Calu3 (cell line): ENCODE measurements at regions of chr16 and their contacts with region 1.

Region 1: DNA sequence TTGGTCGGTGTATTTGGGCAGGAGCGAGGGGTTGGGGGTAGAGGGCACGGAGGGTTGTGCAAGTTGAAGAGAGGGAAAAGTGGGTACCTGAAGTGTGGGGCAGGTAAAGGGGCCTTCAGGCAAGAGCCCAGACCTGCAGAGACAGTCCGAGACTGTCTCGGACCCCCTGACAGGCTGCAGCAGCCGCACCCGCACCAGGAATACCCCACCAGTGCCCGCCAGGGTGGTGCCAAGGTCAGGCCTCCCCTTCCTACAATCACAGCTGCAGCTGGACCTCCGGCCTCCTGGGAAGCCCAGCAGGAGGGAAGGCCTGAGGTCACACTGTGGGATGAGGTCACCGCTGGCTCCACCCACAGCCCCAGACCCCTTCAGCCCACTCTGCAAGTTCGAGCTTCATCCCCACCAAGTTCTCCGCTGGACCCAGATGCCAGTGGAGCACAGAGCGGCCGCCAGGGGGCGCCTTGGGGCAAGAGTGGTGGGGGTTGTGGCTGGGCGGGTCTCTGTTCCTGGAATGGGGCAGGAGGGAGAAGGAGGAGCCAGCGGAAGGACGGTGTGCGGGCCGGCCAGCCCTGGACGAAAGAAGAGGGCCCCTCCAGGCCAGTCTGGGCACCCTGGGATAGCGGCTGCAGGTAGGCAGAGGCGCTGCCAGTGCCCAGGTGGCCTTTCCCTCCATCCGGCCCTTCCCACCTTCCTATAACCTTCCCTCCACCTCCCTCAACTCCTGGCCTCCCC is at the start of gene HSD3B7:
- DNase-seq: peak; percentile 97
- H3K4me3 Mint-ChIP-seq: peak within 1 kb of the TSS; percentile 87
- H3K27ac Mint-ChIP-seq: peak within 1 kb of the TSS; percentile 71
- H3K4me1 Mint-ChIP-seq: no peaks in the 10 kb centered on the region
- H3K27me3 Mint-ChIP-seq: no peaks in the 10 kb centered on the region
- CTCF ChIP-seq: peak; percentile 92
- total RNA-seq, gene HSD3B7: 25.3 and 29.2 TPM in 2 replicates

Region 2: DNA sequence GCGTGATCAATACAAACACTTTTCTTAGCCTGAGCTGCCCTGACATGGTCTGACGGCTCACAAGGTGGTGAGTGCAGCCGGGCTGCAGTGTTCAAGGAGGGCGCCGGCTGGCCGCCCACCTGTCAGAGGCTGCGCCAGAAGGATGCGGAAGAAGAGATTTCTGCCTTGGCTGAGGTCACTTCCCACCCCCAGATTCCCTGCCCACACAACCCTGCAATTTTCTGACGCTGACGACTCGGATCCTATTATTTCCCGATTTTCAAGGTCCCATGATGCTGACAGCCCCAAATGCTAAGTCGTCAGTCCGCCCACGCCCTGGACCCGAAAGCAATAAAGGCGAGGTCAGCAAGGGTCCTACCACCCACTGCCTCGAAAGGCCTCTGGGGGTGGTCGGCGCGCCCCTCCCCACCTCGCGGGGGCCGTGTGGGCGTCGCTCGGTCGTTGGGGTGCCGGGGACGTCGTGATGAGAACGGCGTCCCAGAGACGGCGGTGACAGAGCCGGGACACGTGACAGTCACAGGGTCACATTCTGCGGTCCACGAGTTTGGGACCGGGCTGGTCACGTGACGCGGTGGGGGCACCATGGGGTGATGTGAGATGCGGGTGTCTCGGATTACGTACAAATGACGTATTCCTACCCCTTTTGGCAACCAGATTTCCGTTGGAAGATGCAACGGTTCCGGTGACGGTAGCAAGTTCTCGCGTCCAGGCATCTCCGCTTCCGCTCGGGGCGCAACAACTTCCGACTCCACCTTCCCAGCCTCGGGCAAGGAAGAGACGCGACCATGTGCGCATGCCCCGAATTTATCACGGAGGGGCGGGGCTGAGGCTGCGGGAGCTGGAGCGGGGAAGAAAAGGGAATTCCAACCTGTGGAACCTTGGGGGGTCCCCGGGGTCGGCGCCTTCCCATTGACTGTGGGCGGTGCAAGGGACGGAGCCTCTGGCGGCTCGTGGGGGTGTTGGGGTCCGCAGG is 48.2 kb after region 1 on chr16 and contains the start of gene STX4:
- CTCF ChIA-PET with region 1: interaction called, 7 read pairs
- intact Hi-C with region 1: loop called (anchors 5 kb)
- DNase-seq: peak; percentile 97
- H3K4me3 Mint-ChIP-seq: peak within 1 kb of the TSS; percentile 99
- H3K27ac Mint-ChIP-seq: peak within 1 kb of the TSS; percentile 89
- H3K4me1 Mint-ChIP-seq: no peaks in the 10 kb centered on the region
- H3K27me3 Mint-ChIP-seq: no peaks in the 10 kb centered on the region
- CTCF ChIP-seq: no peak
- total RNA-seq, gene STX4: 100 and 104 TPM in 2 replicates

Region 3: GRCh38 chr16:31044190-31044481 is 59.3 kb after region 1 on chr16:
- CTCF ChIA-PET with region 1: no interaction called
- intact Hi-C with region 1: no loop called
- DNase-seq: no peak
- H3K4me3 Mint-ChIP-seq: no peak overlapping the region
- H3K27ac Mint-ChIP-seq: no peak overlapping the region
- H3K4me1 Mint-ChIP-seq: no peaks in the 10 kb centered on the region
- H3K27me3 Mint-ChIP-seq: no peaks in the 10 kb centered on the region
- CTCF ChIP-seq: no peak

Region 4: GRCh38 chr16:31094424-31095120 is 109.7 kb after region 1 on chr16 and contains the start of gene VKORC1:
- CTCF ChIA-PET with region 1: interaction called, 11 read pairs
- intact Hi-C with region 1: loop called (anchors 1 kb)
- DNase-seq: peak; percentile 97
- H3K4me3 Mint-ChIP-seq: peak within 1 kb of the TSS; percentile 89
- H3K27ac Mint-ChIP-seq: peak within 1 kb of the TSS; percentile 82
- H3K4me1 Mint-ChIP-seq: peaks cover 12% of the 10 kb centered on the region
- H3K27me3 Mint-ChIP-seq: no peaks in the 10 kb centered on the region
- CTCF ChIP-seq: no peak
- total RNA-seq, gene VKORC1: 80.1 and 86.8 TPM in 2 replicates

Region 5: GRCh38 chr16:31157136-31157535 is 172.3 kb after region 1 on chr16:
- CTCF ChIA-PET with region 1: no interaction called
- intact Hi-C with region 1: loop called (anchors 5 kb)
- DNase-seq: no peak
- H3K4me3 Mint-ChIP-seq: no peak overlapping the region
- H3K27ac Mint-ChIP-seq: no peak overlapping the region
- H3K4me1 Mint-ChIP-seq: no peaks in the 10 kb centered on the region
- H3K27me3 Mint-ChIP-seq: no peaks in the 10 kb centered on the region
- CTCF ChIP-seq: no peak

Region 6: GRCh38 chr16:31333686-31334649 is 349.1 kb after region 1 on chr16:
- CTCF ChIA-PET with region 1: interaction called, 8 read pairs
- intact Hi-C with region 1: loop called (anchors 5 kb)
- DNase-seq: peak; percentile 64
- H3K4me3 Mint-ChIP-seq: no peak overlapping the region
- H3K27ac Mint-ChIP-seq: no peak overlapping the region
- H3K4me1 Mint-ChIP-seq: peaks cover 12% of the 10 kb centered on the region
- H3K27me3 Mint-ChIP-seq: peaks cover 36% of the 10 kb centered on the region
- CTCF ChIP-seq: peak; percentile 40

Region 7: DNA sequence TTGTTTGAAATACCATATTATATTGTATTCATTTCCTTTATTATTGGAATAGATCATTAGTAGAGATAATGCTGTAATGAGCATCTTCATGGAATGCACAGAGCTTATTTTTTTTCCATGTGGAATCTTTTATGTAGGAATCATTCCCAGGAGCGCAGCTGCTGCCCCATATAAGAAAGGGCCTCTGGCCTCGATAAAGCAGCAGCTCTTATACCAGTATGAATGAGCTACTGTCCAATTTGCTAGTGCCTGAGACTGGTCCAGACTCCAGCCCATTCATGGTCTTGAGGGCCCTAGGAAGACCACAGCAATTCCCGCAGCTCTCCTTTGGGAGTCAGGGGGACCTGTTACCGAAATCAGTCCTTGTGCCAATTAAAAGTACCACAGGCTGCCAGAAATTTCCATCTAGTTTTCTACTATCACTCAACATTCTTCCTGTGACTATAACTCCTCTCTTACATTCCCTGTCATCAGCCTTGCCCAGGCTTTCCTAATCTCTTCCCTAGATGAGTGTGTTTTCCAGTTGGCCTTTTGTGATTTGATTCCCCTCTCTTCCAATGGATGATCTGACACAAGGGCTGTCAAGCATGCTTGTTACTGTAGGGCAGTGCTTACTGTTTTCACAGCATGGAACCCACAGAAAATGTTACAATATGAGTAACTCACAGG is 455.8 kb after region 1 on chr16:
- CTCF ChIA-PET with region 1: no interaction called
- intact Hi-C with region 1: loop called (anchors 1 kb)
- DNase-seq: no peak
- H3K4me3 Mint-ChIP-seq: no peak overlapping the region
- H3K27ac Mint-ChIP-seq: no peak overlapping the region
- H3K4me1 Mint-ChIP-seq: peaks cover 7% of the 10 kb centered on the region
- H3K27me3 Mint-ChIP-seq: peaks cover 8% of the 10 kb centered on the region
- CTCF ChIP-seq: no peak

Region 8: GRCh38 chr16:31868691-31869167 is 883.9 kb after region 1 on chr16:
- CTCF ChIA-PET with region 1: interaction called, 11 read pairs
- intact Hi-C with region 1: loop called (anchors 2 kb)
- DNase-seq: peak; percentile 86
- H3K4me3 Mint-ChIP-seq: no peak overlapping the region
- H3K27ac Mint-ChIP-seq: no peak overlapping the region
- H3K4me1 Mint-ChIP-seq: peaks cover 9% of the 10 kb centered on the region
- H3K27me3 Mint-ChIP-seq: peaks cover 34% of the 10 kb centered on the region
- CTCF ChIP-seq: peak; percentile 73